ENCODE measurements at regions of chr4 and their contacts with region 1.

Region 1: GRCh38 chr4:74376888-74377483 is 12.0 kb downstream of the EREG start:
- DNase-seq: no peak
- H3K4me3 ChIP-seq: no peak overlapping the region
- H3K27ac ChIP-seq: no peak overlapping the region
- H3K4me1 ChIP-seq: no peaks in the 10 kb centered on the region
- H3K27me3 ChIP-seq: no peaks in the 10 kb centered on the region
- CTCF ChIP-seq: peak; percentile 70

Region 2: DNA sequence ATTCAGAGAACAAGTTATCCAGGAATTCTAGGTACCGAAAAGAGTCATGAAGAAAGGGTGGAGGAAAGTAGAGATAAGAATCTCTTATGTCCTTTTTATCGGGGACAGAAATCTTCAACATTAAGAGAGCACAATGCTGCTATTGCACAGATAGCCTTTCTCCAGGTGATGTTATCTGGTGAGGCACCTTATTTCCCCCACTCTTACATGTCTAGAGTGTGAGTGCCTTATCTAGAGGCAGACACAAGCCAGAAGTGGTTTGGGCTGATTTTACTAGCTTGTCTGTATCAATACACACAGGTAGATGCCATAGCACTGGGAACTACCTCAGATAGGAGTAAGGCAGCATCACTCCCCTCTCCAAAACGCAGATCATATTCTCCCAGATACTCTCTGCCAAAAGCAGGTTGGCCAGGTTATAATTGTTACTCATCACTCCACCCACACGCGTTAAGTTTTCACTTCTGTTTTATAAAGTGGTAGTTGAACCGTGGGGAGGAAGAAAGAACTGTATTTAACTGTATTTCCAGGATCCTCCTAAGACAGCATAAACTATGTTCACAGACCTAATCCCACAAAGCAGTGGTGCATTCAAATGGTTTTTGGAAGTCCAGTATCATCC is 106.4 kb after region 1 on chr4:
- intact Hi-C with region 1: no loop called
- DNase-seq: no peak
- H3K4me3 ChIP-seq: no peak overlapping the region
- H3K27ac ChIP-seq: no peak overlapping the region
- H3K4me1 ChIP-seq: no peaks in the 10 kb centered on the region
- H3K27me3 ChIP-seq: no peaks in the 10 kb centered on the region
- CTCF ChIP-seq: no peak

Region 3: DNA sequence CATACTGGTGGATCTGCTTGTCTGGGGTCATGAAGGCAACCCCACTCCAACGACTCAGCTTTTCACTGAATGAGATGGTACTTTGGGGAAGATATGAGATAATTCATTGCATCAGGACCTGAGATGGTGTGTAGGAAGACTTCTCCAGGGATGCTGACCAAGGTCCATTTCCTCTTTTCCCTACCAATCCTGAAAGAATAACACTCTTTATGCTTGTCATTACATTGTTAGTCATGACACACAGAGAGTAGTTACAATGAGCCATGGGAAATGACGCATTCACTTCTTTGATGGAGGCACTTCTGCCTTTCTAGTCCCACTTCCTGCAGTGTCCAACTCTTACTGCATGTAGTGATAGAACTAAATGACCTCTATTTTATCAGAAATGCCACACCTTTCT is 126.6 kb after region 1 on chr4:
- intact Hi-C with region 1: no loop called
- DNase-seq: no peak
- H3K4me3 ChIP-seq: no peak overlapping the region
- H3K27ac ChIP-seq: no peak overlapping the region
- H3K4me1 ChIP-seq: peaks cover 7% of the 10 kb centered on the region
- H3K27me3 ChIP-seq: no peaks in the 10 kb centered on the region
- CTCF ChIP-seq: no peak

Region 4: GRCh38 chr4:74531963-74532794 is 155.2 kb after region 1 on chr4:
- intact Hi-C with region 1: loop called (anchors 5 kb)
- DNase-seq: no peak
- H3K4me3 ChIP-seq: no peak overlapping the region
- H3K27ac ChIP-seq: no peak overlapping the region
- H3K4me1 ChIP-seq: peaks cover 18% of the 10 kb centered on the region
- H3K27me3 ChIP-seq: no peaks in the 10 kb centered on the region
- CTCF ChIP-seq: peak; percentile 72

Measured in left ventricle myocardium inferior (tissue), 1 donor.